ENCODE measurements at regions of chr9 and their contacts with region 1.

Region 1: DNA sequence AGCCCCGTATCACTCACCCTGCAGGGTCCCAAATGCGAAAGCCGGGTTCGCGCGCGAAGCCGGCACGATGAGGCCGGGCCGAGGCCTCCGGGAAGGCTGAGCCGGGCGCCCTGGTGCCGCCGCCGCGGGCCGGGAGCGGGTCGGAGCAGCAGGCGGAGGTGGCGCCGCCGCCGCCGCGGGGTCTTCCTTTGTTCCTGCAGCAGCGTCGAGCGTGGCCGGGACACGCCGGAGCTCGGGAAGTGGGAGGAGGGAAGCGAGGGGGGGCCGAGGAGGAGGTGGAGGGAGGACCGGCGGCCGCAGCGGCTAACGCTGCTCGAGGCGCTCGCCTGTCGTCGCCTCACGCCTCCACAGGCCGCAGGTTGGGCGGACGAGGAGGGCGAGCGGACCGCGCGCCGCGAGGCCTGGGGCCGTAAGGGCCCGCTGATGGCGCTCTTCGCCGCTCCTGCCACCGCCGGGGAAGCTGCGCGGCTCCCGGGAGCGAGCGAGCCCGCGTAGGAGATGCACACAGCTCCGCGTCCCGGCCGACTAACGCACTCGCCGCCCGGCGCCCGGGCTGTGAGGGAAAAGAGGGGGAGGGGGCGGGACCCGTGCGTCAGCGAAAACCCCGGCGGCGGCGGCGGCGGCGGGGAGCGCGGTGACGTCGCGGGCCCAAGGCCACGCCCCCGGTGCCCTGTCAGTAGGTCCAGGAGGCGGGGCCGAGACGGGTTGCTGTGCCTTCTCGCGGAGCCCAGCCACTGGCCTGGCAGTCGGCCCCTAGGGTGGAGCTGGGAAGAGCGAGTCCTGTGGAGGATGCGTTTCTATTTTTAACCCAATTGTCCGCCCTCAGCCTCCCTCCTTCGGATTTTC is at the start of gene ZFAND5:
- DNase-seq: peak; percentile 98 to 99
- ATAC-seq: peak; percentile 90 to 99 (median 95)
- H3K4me3 ChIP-seq: peak within 1 kb of the TSS; percentile 63 to 94 (median 88)
- H3K27ac ChIP-seq: peak within 1 kb of the TSS; percentile 98 to 100 (median 100)
- H3K4me1 ChIP-seq: peaks cover under 1 to 49% (median 34%) of the 10 kb centered on the region in 9 donors
- H3K27me3 ChIP-seq: no peaks in the 10 kb centered on the region
- CTCF ChIP-seq: peak in 2 of 9 donors; percentile 10 to 17
- total RNA-seq, gene ZFAND5: 158 to 280 (median 230) TPM

Region 2: DNA sequence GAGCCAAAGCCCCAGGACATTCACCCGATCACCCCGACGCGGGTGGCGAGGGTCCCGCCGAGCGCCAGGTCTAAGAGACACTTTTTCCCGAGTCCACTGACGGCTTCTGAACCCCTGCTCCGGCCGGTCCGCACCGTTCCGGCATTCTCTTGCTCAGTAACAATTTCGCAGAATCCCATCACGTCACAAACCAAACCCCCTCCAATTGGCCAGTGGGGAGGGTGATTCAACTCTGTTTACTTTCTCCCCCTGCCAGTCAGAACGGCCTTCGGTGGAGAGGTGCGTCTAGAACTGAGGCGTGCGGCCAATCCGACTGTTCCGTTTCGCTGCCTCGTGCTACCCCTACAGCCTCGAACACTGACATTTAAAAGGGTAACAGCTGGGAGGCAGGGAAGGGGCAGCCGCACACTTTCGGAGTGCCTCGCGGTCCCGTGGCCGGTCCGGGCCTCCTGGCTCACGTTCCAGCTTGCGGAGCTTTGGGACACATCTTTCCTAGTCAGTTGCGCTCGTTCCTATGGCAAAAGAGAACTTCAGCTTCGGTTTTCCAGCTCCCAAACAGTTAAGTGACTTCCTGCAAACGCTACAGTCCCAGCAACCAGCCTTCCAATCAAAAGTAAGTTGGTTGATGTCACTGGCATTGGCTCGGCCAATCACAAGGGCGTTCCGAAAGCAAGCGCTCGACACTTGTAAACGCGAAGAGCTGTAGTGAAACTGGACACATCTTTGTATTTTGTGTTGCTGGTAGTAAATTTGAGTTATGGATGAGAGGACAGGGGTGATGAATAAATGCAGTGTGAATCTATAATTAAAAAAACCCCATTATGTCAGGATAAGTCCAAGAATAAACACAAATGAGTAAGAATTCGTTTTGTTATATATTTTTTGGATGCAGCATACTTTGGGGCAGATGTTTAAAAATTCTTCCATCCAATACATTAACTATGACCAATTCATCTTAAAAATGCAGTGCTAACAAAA is 1950.8 kb before region 1 on chr9 and contains the start of gene KLF9:
- intact Hi-C with region 1: loop called in 1 of 10 experiments (anchors 10 kb)
- DNase-seq: peak; percentile 87 to 96
- ATAC-seq: peak; percentile 74 to 85 (median 81)
- H3K4me3 ChIP-seq: peak within 1 kb of the TSS; percentile 69 to 99 (median 78)
- H3K27ac ChIP-seq: peak within 1 kb of the TSS; percentile 99 to 100 (median 100)
- H3K4me1 ChIP-seq: peaks cover 12 to 67% (median 60%) of the 10 kb centered on the region in 9 donors
- H3K27me3 ChIP-seq: no peaks in the 10 kb centered on the region
- CTCF ChIP-seq: peak in 1 of 9 donors; percentile 10
- total RNA-seq, gene KLF9: 27.3 to 67.4 (median 41.1) TPM

Region 3: DNA sequence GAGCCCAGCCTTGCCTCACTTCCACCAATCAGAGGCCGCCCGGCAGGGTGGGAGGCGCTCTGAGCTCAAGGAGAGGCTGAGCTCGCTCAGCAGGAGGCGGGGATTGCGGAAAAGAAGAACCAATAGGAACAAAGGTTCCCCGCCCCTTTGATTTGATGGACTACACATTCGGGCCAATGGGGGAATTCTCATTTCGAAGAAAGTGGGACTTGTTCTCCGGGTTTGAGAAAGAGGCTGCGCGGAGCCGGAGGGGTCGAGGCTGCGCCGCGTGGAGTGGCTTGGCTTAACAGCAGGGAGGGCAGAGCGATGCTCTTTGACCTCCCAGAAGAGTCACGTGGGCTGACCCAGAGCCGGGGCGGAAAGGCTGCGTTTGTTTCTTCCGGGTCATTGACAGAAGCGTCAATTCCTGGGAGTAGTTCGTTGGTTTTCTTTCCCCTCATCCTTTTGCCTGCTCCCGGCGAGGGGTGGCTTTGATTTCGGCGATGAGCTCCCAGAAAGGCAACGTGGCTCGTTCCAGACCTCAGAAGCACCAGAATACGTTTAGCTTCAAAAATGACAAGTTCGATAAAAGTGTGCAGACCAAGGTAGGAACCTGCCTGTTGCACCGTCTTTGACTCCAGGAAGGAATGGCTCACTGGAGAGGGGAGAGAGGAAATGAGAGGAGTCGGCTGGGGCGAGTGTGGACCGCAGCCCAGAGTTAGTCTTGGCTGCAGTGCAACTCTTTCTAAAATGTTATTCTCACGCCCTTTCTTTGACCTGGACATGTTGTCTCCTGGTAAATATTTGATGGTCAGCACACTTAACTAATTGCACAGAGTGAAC is 453.4 kb before region 1 on chr9 and contains the start of gene C9orf85:
- intact Hi-C with region 1: loop called in 3 of 10 experiments (anchors 10 kb)
- DNase-seq: peak; percentile 98 to 99
- ATAC-seq: peak; percentile 98 to 100 (median 99)
- H3K4me3 ChIP-seq: peak within 1 kb of the TSS; percentile 64 to 99 (median 94)
- H3K27ac ChIP-seq: peak within 1 kb of the TSS; percentile 82 to 98 (median 94)
- H3K4me1 ChIP-seq: peaks cover 0 to 63% (median 46%) of the 10 kb centered on the region in 9 donors
- H3K27me3 ChIP-seq: no peaks in the 10 kb centered on the region
- CTCF ChIP-seq: no peak
- total RNA-seq, gene C9orf85: 3.8 to 8.5 (median 6.1) TPM

Region 4: GRCh38 chr9:72305102-72305546 is 59.8 kb before region 1 on chr9:
- intact Hi-C with region 1: loop called in 4 of 10 experiments (anchors 1 to 10 kb)
- DNase-seq: peak; percentile 78 to 91
- ATAC-seq: peak; percentile 97 to 100 (median 100)
- H3K4me3 ChIP-seq: peak overlapping the region in 7 of 10 donors; percentile 18 to 55 (median 51)
- H3K27ac ChIP-seq: peak overlapping the region in 9 of 10 donors; percentile 8 to 96 (median 87)
- H3K4me1 ChIP-seq: peaks cover 0 to 60% (median 6%) of the 10 kb centered on the region in 9 donors
- H3K27me3 ChIP-seq: no peaks in the 10 kb centered on the region
- CTCF ChIP-seq: no peak

Region 5: DNA sequence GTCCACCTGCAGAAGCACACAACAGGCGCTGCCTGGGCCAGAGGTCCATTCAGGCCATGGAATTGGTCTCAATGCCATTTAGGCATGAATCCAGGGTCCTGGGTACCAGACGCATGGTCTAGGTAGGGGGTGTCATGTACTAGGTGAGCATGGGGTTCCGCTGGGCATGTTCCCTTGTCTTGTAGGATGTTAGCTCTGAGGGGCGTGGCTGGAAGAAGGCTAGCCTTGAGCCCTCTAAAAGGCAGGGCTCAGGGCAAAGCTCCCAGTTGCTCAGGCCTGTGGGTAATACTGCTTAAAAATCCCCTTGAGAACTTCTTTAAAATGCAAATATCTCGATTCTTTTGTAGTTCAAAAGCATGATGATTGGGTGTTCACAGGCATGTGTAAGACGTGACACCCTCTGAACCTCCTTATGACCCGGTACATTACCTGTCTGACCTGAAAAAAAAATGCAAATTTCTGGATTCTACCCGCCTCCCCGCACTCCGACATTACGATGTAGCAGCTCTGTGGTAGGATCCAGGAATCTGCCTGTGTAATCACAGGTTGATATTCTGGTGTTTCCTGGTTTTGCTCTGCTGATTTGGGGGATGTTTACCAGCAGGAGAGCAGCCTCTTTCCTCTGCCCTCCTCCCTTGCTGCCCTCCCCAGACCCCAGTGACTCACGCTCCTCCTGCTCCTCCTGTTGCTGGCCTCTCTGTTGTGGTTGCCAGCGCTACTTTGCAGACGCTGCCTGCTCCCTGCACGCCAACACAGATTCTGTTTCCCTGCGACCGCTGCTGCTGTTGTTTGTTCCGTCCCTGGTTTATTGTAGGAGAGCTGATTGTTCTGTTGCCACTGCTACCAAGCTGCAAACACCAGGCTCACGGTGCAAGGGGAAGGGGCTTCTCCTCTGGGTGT is 162.2 kb after region 1 on chr9:
- intact Hi-C with region 1: loop called in 2 of 10 experiments (anchors 10 kb)
- DNase-seq: peak; percentile 61 to 63
- ATAC-seq: peak; percentile 83 to 97 (median 92)
- H3K4me3 ChIP-seq: peak overlapping the region in 9 of 10 donors; percentile 11 to 40 (median 27)
- H3K27ac ChIP-seq: peak overlapping the region in 7 of 10 donors; percentile 6 to 80 (median 67)
- H3K4me1 ChIP-seq: peaks cover 0 to 36% (median 18%) of the 10 kb centered on the region in 9 donors
- H3K27me3 ChIP-seq: no peaks in the 10 kb centered on the region
- CTCF ChIP-seq: peak in 1 of 9 donors; percentile 9

Region 6: DNA sequence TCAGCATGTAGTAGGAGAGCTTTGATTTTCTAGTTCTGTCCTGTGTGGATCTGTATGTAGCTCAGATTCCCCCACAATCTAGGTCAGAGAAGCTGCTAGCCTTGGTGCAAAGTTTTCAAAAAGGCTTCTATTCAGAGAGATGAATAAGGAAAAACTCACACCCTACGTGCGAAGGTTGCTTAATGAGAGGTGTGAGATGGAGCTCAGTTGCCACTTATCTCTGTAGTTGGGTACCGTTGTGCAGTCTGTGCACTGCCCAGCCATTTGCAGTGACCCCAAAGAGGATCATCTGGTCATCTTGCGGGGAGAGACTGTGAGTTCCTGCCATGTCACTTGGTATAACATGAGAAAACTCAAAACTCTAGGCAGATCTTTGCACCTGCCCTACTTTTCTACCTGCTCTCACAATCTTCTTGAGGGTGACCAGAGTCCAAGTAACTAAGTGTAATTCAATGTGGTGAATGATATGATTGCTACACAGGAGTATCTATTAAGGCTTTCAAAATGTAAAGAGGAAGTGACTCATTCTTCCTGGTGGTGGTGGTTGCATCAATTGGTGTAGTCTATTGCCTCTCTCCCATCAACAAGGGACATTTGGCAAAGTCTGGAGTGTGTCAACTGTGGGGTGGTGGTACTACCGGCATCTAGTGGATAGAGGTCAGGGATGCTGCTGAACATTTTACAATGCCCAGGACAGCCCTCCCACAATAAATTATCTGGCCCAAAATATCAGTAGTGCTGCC is 221.7 kb after region 1 on chr9:
- intact Hi-C with region 1: loop called in 9 of 10 experiments (anchors 5 to 10 kb)
- DNase-seq: no peak
- ATAC-seq: peak in 5 of 8 donors; percentile 39 to 86 (median 49)
- H3K4me3 ChIP-seq: no peak overlapping the region
- H3K27ac ChIP-seq: peak overlapping the region in 1 of 10 donors; percentile 17
- H3K4me1 ChIP-seq: peaks cover 0 to 63% (median 5%) of the 10 kb centered on the region in 9 donors
- H3K27me3 ChIP-seq: no peaks in the 10 kb centered on the region
- CTCF ChIP-seq: no peak

Region 7: GRCh38 chr9:73149371-73150067 is 784.6 kb after region 1 on chr9:
- intact Hi-C with region 1: loop called in 2 of 10 experiments (anchors 10 kb)
- DNase-seq: no peak
- ATAC-seq: peak in 4 of 8 donors; percentile 40 to 67 (median 44)
- H3K4me3 ChIP-seq: peak overlapping the region in 3 of 10 donors; percentile 2 to 16 (median 13)
- H3K27ac ChIP-seq: peak overlapping the region in 8 of 10 donors; percentile 1 to 84 (median 52)
- H3K4me1 ChIP-seq: peaks cover 0 to 62% (median 26%) of the 10 kb centered on the region in 9 donors
- H3K27me3 ChIP-seq: no peaks in the 10 kb centered on the region
- CTCF ChIP-seq: no peak

Measured in heart right ventricle (tissue), 16 donors.